AG04449 (cell line): ENCODE measurements at regions of chr2 and their contacts with region 1.

Region 1: DNA sequence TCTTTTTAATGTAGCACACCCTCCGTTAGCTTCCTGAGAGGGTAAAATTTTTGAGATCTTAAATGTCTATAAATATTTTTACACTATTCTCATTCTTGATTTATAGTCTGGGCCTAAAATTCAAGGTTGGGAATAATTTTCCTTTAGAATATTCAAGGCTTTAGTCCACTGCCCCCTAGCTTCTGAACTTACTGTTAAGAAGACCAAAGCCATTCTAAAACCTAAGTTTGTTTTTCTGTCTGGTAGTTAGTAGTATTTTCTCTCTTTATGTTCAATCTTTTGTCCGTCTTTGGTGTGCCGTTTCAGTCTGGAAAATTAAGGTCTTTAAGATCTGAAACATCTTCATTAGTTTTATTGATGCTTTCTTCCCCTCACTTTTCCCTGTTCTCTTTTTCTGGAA is 14.5 kb downstream of the OSBPL6 start:
- DNase-seq: no peak
- H3K4me3 ChIP-seq: no peak overlapping the region
- CTCF ChIP-seq: no peak

Region 2: DNA sequence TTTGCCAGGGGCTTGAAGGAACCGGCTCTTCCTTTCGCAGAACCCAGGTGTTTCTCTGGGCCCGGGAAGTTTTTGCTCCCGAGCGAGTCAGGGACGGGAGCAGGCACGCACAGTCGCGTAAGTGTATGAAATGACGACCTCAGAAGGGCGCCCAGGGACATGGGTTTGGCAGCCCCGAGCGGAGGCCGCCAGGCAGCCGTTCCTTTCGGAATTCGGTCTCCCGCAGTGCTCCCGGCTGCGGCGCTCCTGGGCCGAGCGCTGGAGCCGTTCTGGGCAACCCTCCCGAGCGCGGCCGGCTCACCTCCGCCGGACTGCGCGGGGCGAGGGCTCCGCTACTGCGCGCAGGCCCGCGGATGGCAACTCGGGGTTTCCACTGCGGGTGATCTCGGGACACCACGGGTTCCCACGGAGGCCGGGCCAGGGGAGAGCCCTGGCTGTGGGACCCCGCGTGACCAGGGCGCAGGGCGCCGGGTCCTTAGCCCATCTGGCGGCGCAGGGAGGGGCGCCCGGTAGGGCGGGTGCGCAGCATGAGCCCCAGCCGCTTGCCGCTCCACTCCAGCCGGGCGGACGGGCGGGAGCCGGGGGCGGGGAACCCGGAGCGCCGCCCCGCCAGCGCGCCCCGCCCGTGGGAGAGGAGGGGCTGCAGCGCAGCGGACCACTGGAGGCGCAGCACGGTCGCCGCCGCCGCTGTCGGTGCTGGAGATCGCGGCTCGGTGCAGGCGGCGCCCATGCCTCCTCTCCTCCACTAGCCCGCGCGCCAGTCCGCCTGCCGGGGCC is 14.8 kb before region 1 on chr2 and contains the start of gene OSBPL6:
- CTCF ChIA-PET with region 1: interaction called, 11 read pairs
- POLR2A ChIA-PET with region 1: interaction called, 10 read pairs
- DNase-seq: no peak
- H3K4me3 ChIP-seq: peak within 1 kb of the TSS; percentile 79
- CTCF ChIP-seq: peak; percentile 40

Region 3: DNA sequence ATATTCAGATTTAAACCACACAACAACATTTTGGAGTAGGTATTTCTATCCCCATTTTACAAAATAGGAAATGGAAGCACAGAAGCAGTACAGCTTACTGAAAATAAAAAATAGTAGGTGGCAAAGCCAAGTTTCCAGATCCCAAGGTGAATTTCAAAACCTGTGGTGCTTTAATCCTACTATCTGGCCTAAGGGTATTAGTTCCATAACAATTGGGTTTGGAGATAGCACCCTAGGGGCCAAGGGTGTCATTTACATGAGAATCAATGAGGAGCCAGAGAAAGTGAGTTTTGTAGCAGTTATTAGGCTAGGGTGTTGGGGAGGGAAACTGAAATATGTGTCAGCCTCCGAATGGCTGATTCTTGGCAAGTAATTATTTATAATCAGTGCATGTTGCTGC is 10.4 kb after region 1 on chr2:
- CTCF ChIA-PET with region 1: interaction called, 16 read pairs
- POLR2A ChIA-PET with region 1: no interaction called
- DNase-seq: no peak
- H3K4me3 ChIP-seq: no peak overlapping the region
- CTCF ChIP-seq: no peak

Region 4: GRCh38 chr2:178324077-178324476 is 115.3 kb after region 1 on chr2:
- CTCF ChIA-PET with region 1: no interaction called
- POLR2A ChIA-PET with region 1: no interaction called
- DNase-seq: no peak
- H3K4me3 ChIP-seq: no peak overlapping the region
- CTCF ChIP-seq: no peak